ENCODE measurements at regions of chr15 and their contacts with region 1.

Region 1: DNA sequence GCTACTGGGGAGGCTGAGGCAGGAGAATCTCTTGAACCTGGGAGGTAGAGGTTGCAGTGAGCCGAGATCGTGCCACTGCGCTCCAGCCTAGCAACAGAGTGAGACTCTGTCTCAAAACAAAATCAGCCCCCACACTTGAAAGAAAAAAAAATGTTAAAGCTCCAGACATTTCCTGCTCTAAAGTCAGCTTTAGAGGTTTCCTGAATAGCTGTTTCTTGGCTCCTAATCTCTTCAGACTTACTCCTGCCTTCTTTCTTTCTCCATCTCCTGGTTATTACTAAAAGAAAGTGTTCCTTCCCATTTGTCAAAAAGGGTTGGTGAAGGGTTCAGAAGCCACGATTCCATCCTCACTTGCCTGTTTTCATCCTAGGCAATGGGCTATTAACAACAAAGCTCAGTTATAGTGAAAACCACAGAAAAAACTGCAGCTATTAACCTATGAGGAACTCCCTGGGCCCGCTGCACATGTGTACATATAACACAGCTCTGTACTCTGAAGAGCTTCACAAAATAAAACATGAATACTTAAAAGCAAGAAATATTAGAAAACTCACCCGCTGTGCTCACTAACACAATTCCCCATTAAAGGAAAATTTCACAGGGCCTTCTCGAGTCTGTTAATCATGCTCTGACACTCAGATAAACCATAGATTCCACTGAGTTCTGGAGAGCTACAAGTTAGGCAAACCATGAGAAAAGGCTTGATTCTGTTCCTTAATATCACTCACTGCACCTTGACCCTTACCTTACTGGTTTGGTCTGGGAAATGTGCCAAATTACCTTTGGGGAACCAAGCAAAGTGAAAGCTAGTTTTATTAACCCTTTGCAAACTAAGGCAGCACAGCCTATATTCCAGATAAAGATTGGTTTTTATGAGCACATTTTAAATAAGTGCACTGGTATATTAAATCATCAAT is 89.9 kb upstream of the TSPAN3 start:
- DNase-seq: peak; percentile 77
- H3K4me3 Mint-ChIP-seq: peak overlapping the region; percentile 67
- H3K27ac Mint-ChIP-seq: peak overlapping the region; percentile 95
- H3K4me1 Mint-ChIP-seq: peaks cover 78% of the 10 kb centered on the region
- H3K27me3 Mint-ChIP-seq: no peaks in the 10 kb centered on the region
- CTCF ChIP-seq: no peak

Region 2: GRCh38 chr15:77118882-77119321 is 41.9 kb before region 1 on chr15:
- CTCF ChIA-PET with region 1: interaction called, 17 read pairs
- intact Hi-C with region 1: loop called (anchors 1 kb)
- DNase-seq: peak; percentile 51
- H3K4me3 Mint-ChIP-seq: no peak overlapping the region
- H3K27ac Mint-ChIP-seq: no peak overlapping the region
- H3K4me1 Mint-ChIP-seq: peaks cover 19% of the 10 kb centered on the region
- H3K27me3 Mint-ChIP-seq: no peaks in the 10 kb centered on the region
- CTCF ChIP-seq: peak; percentile 71

Region 3: DNA sequence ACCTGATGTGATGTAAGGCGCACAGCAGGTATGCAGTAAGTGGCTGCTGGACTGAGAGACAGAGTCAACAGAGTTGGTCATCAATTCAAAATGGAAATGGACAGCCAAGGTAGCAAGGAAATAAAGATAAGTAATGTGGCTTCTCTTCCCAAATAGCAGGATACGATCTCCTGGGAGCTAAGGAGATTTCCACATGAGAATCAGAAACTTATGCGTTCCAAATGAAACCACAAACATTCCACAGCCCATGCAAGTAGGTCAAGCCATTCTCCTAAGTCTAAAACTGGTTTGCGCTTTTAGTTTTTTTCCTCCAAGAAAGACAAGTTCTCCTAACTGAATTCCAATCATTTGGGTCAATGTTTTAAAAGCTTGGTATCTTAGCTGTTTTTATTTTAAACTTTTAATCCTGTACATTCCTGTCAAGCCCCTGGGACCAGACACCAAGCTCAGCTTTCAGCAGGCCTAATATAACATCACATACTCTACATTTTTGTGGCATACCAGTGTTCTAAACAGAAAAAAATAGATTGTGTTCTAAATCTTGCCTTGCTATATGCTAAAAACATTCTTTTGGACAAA is 16.2 kb before region 1 on chr15:
- CTCF ChIA-PET with region 1: interaction called, 15 read pairs
- intact Hi-C with region 1: loop called (anchors 1 kb)
- DNase-seq: peak; percentile 15
- H3K4me3 Mint-ChIP-seq: peak overlapping the region; percentile 31
- H3K27ac Mint-ChIP-seq: peak overlapping the region; percentile 94
- H3K4me1 Mint-ChIP-seq: peaks cover 48% of the 10 kb centered on the region
- H3K27me3 Mint-ChIP-seq: no peaks in the 10 kb centered on the region
- CTCF ChIP-seq: no peak

Region 4: DNA sequence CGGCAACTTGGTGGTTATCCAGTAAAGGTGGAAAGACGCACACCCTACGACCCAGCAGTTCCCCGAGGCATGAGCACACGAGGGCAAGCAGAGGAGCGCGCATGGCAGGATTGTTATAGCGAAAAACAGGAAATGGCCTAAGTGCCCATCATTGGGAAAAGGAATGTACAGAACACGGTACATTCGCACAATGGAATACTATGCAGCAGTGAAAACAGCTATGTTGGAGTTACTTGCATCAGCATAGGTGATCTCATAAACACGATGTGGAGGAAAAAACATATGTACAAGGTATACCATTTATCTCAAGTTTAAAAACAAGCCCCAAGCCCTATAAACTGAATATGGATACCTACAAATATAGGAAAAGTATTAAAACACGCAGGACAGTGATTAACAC is 478.6 kb after region 1 on chr15:
- CTCF ChIA-PET with region 1: no interaction called
- intact Hi-C with region 1: no loop called
- DNase-seq: no peak
- H3K4me3 Mint-ChIP-seq: no peak overlapping the region
- H3K27ac Mint-ChIP-seq: peak overlapping the region; percentile 37
- H3K4me1 Mint-ChIP-seq: no peaks in the 10 kb centered on the region
- H3K27me3 Mint-ChIP-seq: peaks cover 100% of the 10 kb centered on the region
- CTCF ChIP-seq: no peak